ENCODE measurements at regions of chr13 and their contacts with region 1.

Region 1: DNA sequence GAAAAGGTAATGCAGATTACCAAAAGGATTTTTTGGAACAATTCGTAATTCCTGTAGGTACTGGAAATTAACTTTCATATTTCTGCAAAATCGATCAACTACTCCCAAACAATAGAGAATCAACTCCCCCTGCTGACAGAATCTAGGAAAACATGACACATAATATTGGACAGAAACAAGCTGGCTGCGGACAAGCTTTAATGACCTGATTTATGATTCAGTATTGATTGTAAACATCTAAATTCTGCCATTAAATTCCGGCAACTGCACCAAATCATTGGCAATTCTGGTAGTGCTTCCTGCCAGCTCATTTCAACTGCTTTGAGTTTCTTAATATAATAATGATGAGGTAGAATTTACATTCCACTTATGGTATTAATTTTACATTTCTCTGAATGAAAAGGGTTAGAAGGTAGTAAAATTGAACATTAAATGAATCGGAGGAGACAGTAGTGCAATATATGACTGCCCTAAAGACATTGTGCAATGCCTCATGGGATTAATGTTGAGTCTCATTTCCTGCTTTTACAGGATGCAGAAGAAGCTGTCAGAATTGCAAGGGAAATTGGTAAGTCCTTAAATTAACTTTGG is 146.5 kb downstream of the PCCA start:
- DNase-seq: peak in 1 of 3 donors; percentile 74
- ATAC-seq: peak; percentile 32
- H3K4me3 ChIP-seq: no peak overlapping the region
- H3K4me1 ChIP-seq: peaks cover 17% of the 10 kb centered on the region
- CTCF ChIP-seq: peak; percentile 31

Region 2: GRCh38 chr13:99656092-99656745 is 579.2 kb before region 1 on chr13:
- intact Hi-C with region 1: loop called in 1 of 2 experiments (anchors 10 kb)
- DNase-seq: peak in 2 of 3 donors; percentile 72 to 94
- ATAC-seq: peak; percentile 92
- H3K4me3 ChIP-seq: no peak overlapping the region
- H3K4me1 ChIP-seq: peaks cover 14% of the 10 kb centered on the region
- CTCF ChIP-seq: peak; percentile 86

Region 3: DNA sequence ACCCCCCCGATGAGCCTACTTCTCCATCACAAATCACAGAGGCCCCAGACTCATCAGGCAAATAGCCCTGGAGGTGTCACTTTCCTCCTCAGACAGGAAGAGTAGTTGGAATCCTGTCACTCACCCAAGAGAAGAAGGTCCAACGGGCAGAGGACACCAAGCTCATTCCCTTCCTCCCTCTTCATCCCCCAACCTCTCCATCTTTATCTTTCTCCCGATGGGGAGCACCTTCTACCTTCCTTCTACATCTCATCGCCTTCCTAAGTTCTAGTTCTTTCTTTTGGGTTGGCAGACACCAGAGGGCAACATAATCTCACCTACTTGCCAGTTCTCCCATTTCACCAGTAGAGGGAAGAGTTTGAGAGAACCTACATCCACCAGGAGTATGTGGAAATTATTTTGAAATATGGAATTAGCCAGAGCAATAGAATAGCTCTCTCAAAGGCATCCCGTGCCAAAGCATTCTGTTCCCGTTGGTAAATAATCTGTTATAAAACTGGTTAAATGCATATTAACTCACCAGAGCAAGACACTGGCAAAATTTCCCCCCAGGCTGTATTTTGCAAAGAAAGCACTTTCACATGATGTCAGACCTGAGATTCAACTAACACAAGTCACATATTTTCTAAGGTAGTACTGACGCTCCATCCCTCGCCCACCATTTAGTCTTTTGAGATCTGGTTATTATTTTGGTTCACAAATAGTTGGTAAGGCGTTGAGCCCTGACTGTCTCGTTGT is 318.9 kb before region 1 on chr13:
- intact Hi-C with region 1: loop called in 1 of 2 experiments (anchors 5 kb)
- DNase-seq: peak in 1 of 3 donors; percentile 58
- ATAC-seq: peak; percentile 92
- H3K4me3 ChIP-seq: no peak overlapping the region
- H3K4me1 ChIP-seq: peaks cover 3% of the 10 kb centered on the region
- CTCF ChIP-seq: peak; percentile 61

Region 4: DNA sequence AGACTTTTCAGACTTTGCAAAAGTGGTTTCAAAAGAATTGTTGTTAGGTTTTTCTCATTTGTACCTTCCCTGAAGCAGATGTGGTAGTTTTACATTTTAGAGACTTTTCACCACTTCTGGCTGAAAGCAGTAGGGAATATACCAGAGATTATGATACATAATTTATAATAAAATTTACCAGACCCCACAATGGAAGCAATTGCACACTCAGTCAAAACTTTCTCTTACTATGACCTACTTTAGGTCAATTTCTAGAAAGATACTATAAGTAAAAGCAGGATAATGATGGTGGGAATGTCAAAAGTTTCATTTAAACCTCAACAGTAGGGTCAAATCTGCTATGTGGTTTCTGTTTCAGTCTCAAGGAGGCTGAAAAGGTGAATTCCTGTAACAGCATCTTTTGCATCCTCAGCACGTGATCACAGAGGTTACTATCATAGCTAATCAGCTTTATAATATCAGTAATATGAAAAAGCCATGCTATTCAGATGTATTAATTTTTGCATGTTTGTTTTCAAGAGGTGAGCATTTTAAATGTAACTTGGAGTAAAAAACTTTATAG is 119.6 kb before region 1 on chr13:
- intact Hi-C with region 1: no loop called
- DNase-seq: no peak
- ATAC-seq: no peak
- H3K4me3 ChIP-seq: no peak overlapping the region
- H3K4me1 ChIP-seq: peaks cover 5% of the 10 kb centered on the region
- CTCF ChIP-seq: no peak

Measured in mucosa of descending colon (tissue), 3 donors.